Head of caudate nucleus (tissue), 42 donors: ENCODE measurements at regions of chr2 and their contacts with region 1.

Region 1: DNA sequence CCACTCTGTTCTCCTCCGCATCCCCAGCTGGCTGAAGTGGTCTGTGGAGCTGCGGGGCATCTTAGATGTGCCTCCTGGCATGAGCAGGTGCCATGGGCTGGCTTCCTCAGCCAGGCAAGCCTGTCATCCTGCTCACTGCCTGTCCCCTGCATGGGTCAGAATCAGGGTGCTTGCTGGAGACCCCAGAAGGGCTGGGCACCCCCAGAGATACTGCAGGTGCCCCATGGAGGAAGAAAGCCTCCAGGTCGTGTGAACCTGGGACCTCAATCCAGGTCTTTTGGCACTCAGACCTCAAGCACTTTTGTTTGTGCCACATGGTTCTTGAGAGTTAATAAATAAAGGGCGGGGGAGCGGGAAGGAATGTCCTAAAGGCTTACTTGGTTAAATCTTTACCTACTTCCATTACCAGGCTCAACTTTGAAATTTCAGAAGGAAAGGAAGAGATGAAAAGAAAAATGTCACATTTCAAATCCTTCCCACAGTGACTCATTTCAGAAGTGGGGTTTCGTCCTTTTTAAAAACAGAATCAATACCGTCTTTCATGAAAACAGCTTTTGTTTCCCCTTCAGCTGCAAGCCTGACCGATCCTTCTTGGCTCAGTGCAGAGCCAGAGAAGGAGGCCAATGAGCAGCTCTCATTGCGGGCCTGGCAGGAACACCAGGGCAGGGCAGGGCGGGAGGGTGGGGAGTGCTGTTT is 69.9 kb downstream of the RHOB start:
- DNase-seq: peak; percentile 46 to 92 (median 78)

Region 2: DNA sequence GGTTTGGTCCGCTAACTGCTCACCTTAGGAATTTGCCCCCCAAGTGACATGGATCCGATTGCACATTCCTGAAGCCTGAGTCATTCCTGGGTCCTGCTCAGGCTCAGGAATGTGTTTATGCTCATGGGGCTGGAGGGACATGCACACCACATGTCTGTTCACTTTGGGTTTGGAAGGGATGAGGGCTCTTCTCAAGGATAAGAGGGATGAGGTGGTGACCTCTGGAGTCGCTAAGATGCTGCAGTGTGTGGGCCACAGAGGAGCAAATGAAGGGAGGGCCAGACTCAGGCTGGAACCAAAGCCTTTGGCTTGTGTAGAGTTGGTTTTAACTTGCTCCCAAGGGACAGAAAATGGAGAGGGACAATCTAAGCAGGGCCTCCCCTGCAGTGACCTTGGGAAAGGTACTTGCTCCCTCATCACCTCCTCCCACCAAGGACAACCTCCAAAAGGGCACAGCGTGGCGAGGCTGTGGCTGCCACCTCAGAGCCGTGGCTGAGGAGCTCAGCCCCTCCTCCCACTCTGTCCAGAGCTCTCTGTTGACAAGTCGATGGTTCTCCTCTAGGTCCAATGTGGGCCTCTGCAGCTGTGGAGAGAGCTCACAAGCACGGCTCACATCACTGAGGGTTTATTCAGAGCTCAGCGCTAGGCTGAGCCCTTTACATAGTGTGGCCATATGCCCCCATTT is 68.0 kb after region 1 on chr2:
- intact Hi-C with region 1: no loop called
- DNase-seq: peak; percentile 31 to 89 (median 74)

Region 3: DNA sequence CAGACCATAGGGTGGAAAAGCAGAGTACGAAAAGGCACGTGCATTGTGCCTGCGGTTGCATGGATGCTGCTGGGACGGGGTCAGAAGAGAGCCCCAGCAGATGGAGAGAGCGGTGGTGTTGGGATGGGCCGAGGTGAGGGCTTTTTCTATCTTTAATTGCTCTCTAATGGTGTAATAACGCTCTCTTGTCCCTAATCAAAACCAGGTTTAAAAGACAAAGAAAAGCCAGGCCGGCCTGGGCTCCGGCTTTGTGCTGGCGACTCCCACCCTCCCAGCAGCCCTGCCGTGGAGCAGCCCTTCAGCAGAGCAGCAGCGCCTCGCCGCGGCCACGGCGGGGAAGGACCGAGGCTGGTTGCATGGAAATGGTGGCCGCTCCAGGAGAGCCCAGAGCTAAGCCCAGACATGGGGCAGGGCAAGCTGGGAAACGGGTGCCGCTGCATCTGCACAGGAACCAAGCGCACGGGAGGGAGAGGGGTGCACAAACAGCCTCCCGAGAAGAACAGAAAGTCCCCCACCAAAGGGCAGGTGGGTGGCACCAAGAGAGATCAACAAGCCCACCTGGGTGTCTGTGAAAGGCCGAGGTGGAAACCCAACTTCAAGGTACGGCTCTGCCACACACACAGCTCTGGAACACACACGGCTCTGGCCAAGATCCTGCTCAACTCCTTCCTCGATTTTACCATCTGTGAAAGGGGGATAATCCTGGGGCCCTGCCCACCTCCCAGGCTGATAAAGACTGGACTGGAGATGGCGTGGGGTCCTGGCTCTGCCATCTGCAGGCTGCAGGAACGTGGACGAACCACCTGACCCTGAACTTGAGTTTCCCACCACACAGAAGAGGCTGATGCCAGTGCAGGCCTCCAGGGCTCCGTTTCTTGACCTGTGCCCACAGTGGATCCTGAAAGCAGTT is 119.1 kb after region 1 on chr2:
- intact Hi-C with region 1: loop called (anchors 10 kb)
- DNase-seq: peak; percentile 79 to 96 (median 91)

Region 4: GRCh38 chr2:20916604-20917286 is 400.0 kb after region 1 on chr2:
- intact Hi-C with region 1: no loop called
- DNase-seq: peak in 6 of 42 donors; percentile 9 to 41 (median 17)